ENCODE measurements at regions of chr4 and their contacts with region 1.

Region 1: DNA sequence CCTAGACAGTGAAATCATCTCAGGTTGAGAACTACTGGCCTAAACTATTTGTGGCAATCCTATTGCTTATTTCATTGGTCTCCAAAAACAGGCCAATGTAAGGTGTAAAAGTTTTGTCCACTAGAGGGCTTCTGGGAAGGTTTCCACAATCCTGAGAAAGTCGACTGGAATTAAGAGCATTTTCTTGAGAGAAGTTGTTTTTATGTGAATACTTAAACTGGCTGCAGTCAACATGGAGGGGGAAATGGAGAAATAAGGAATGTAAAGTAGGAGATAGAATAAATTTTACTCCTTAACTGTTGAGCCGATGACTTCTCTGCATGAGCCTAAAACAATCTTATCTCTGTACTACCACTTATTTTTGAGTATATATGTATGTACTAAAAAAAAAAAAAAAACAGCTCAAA is 11.0 kb upstream of the EIF4E start:
- DNase-seq: no peak
- ATAC-seq: peak; percentile 51

Region 2: GRCh38 chr4:99100876-99101275 is 161.0 kb after region 1 on chr4:
- intact Hi-C with region 1: no loop called
- DNase-seq: no peak
- ATAC-seq: no peak

Region 3: DNA sequence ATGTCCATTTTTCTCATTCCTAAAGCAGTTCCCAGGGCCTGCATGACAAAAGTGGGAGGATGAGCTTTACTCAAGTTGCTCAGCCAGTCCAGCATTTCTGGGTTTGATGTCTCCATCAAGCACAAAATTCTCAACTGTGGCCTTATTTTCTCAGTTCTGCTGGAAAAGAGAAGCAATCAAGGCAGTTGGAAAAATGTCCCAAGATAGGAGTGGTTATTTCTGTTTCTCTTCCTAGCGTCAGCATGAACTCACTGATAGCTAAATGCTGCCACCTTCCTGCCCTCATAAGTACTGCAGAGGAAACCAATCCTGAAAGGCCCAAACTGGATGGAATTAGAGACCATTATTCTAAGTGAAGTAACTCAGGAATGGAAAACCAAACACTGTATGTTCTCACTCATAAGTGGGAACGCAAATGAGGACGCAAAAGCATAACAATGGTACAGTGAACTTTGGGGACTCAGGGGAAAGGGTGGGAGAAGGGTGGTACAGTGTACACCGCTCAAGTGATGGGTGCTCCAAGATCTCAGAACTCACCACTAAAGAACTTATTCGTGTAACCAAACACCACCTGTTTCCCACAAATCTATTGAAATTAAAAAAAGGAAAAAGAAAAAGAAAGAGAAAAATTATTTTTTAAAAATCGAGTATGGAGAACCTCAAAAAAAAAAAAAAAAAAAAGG is 465.7 kb after region 1 on chr4:
- intact Hi-C with region 1: loop called (anchors 10 kb)
- DNase-seq: peak; percentile 26
- ATAC-seq: peak; percentile 83